Ascending aorta (tissue), 2 donors: ENCODE measurements at regions of chr1 and their contacts with region 1.

Region 1: DNA sequence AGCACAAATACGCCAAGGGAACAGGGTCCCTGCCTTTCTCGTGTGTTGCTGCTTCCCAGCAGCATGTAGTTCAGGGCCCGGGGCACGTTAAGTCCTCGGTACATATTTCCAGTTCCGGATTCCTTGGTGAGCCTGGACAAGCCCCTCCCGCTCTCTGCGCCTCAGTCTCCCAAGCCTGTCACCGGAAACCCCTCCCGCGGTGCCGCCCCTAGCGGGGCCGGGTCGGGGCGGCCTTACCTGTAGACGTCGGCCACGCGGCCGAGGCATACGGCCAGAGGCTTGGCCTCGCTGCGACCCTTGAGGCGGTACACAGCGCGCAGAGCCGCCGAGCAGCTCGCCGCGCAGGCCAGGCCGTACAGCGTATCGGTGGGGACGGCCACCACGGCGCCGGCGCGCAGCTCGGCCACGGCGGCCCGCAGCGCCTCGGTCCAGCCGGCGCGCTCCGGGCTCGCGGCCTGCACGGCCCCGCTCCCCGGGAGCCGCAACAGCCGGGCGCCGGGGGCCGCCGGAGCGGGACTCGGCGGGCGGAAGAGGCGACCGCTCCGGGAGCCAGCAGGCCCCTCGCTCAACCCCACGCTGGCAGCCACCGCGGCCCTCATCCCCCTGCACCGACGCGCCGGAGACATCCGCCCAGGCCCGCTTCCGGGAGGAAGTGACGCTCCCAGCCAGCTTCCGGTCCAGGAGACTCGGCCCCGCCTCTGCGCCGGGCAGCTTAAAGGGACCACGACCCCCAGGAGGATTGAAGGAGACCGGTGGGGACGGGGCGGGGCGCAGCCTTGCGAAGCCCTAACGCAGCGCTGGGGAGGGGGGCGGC is at the starts of genes C1orf122 and YRDC:
- DNase-seq: peak; percentile 65 to 97
- H3K4me3 ChIP-seq: peak within 1 kb of the TSS; percentile 90 to 92
- H3K27ac ChIP-seq: peak within 1 kb of the TSS; percentile 98 to 99
- H3K4me1 ChIP-seq: peaks cover 6 to 15% of the 10 kb centered on the region in 2 donors
- H3K27me3 ChIP-seq: no peaks in the 10 kb centered on the region
- CTCF ChIP-seq: no peak
- total RNA-seq, gene C1orf122: 284 TPM
- total RNA-seq, gene YRDC: 9.7 TPM

Region 2: GRCh38 chr1:37595440-37596319 is 212.1 kb before region 1 on chr1 and contains the start of gene GNL2:
- intact Hi-C with region 1: loop called (anchors 5 kb)
- DNase-seq: peak; percentile 86 to 98
- H3K4me3 ChIP-seq: peak within 1 kb of the TSS; percentile 78 to 80
- H3K27ac ChIP-seq: peak within 1 kb of the TSS; percentile 81 to 82
- H3K4me1 ChIP-seq: peaks cover 5 to 15% of the 10 kb centered on the region in 2 donors
- H3K27me3 ChIP-seq: no peaks in the 10 kb centered on the region
- CTCF ChIP-seq: no peak
- total RNA-seq, gene GNL2: 17.0 TPM

Region 3: GRCh38 chr1:37859507-37860345 is 52.0 kb after region 1 on chr1 and contains the start of gene MTF1:
- intact Hi-C with region 1: loop called (anchors 1 kb)
- DNase-seq: peak; percentile 92 to 98
- H3K4me3 ChIP-seq: peak within 1 kb of the TSS; percentile 68 to 80
- H3K27ac ChIP-seq: peak within 1 kb of the TSS; percentile 82 to 87
- H3K4me1 ChIP-seq: peaks cover 6 to 19% of the 10 kb centered on the region in 2 donors
- H3K27me3 ChIP-seq: no peaks in the 10 kb centered on the region
- CTCF ChIP-seq: peak; percentile 66 to 91 (median 81)
- total RNA-seq, gene MTF1: 10.6 TPM

Region 4: DNA sequence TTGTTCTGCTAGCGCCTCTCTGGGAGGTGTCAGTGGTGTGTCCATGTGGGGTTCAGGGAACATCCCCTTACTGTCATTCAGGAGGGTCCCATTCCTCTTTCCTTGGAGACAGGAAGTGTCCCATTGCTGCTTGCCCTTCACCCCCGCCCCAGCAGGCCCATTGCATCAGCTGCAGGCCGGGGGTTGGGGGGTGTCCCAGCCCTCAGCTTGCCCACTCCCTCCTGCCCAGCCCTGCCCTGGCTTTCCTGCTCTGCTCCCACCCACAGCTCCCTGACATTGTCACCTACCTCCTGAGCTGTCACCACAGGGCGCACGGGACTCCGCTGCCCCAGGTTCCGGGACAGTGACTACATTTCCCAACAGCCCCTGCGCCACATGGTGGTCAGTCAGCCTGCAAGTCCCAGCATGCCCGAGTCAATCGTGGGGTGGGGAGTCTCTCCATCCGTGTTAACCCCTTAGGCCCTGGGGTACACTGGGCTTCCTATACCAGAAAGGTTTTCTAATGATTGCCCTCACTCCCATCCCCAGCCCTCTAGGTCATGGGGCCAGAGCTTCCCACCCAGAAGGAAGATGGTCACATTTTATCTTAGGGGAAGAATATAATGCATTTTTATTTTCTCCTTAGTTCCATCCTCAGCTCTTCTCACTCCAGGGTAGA is 139.1 kb after region 1 on chr1 and contains the start of gene INPP5B:
- intact Hi-C with region 1: loop called (anchors 2 kb)
- DNase-seq: peak; percentile 79 to 95
- H3K4me3 ChIP-seq: peak within 1 kb of the TSS; percentile 90 to 91
- H3K27ac ChIP-seq: peak within 1 kb of the TSS; percentile 94
- H3K4me1 ChIP-seq: peaks cover 0 to 18% of the 10 kb centered on the region in 2 donors
- H3K27me3 ChIP-seq: no peaks in the 10 kb centered on the region
- CTCF ChIP-seq: peak in 1 of 3 experiments; percentile 13
- total RNA-seq, gene INPP5B: 11.7 TPM

Region 5: DNA sequence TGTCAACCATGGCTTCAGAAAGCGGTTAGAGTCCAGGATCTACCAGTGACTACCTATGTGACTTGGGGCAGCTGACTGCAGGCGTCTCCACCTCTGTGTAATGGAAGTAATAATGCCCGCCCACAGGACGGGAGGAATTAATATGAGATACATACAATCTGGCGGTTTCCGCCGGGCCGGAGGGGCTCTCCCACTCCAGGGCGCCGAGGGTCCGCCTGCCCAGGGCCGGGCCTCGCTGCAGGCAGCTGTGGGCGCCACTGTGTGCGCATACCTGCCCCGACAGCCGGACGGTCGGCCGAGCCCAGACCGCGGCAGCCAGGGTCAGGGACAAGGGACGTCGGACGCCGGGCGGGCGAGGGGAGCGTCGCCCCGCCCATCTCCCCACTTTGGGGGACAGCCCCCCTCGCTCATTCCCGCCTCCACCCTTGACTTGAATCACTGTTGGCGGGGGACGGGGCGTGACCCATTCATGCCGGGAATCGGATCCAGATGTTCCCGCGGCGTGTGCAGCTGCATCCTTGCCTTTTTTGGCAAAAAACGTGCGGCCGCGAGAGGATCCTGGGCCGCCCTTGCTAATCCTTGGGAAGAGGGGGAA is 188.1 kb after region 1 on chr1:
- intact Hi-C with region 1: loop called (anchors 5 kb)
- DNase-seq: peak in 1 of 2 donors; percentile 91
- H3K4me3 ChIP-seq: peak overlapping the region; percentile 64 to 78
- H3K27ac ChIP-seq: peak overlapping the region; percentile 93 to 96
- H3K4me1 ChIP-seq: peaks cover 20 to 46% of the 10 kb centered on the region in 2 donors
- H3K27me3 ChIP-seq: no peaks in the 10 kb centered on the region
- CTCF ChIP-seq: no peak

Region 6: GRCh38 chr1:38138498-38139233 is 330.9 kb after region 1 on chr1:
- intact Hi-C with region 1: loop called (anchors 1 kb)
- DNase-seq: peak; percentile 48 to 95
- H3K4me3 ChIP-seq: peak overlapping the region in 1 of 2 donors; percentile 36
- H3K27ac ChIP-seq: peak overlapping the region; percentile 63 to 68
- H3K4me1 ChIP-seq: peaks cover 0 to 21% of the 10 kb centered on the region in 2 donors
- H3K27me3 ChIP-seq: no peaks in the 10 kb centered on the region
- CTCF ChIP-seq: peak; percentile 41 to 43 (median 42)